H1 (cell line): ENCODE measurements at regions of chr18 and their contacts with region 1.

Region 1: DNA sequence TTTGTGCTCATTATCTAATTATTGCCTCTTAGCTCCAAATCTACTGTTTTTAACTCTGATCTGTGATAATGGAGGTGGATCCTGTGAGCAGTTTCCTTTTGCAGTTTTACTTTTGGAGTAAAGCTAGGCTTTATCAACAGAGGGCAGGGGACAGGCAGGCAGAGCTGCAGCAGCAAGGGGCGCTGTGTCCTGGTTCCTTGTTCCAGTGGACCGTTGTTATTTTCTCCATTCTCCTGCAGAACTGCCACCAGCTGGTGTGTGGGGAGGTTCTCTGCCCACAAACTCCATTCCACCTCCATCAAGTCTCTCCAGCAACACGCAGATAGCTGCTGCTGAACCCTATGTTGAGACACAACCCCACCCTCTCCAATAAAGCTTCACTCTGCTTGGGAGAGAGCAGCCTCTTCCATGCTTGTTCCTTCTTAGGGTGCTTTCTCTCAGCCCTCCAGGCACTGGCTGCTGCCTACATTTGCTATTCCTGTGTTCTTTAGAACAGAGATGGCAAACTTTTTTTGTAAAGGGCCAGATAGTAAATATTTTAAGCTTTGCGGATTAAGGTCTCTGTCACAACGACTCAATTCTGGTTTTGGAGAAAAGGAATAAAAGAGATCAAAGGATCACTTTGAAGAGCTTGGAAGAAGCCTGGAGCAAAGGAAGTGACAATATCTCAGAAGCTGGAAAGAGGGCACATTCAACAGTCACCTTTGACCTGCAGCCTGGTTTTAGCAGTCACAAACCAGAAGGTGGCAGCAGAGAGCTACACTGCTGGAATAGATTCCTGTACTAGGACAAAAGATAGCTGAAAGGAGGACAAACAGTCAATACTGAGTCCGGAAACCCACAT is 208.8 kb downstream of the CCDC178 start:
- DNase-seq: peak; percentile 50 to 84
- H3K4me3 ChIP-seq: no peak overlapping the region
- H3K27ac ChIP-seq: no peak overlapping the region
- H3K4me1 ChIP-seq: no peaks in the 10 kb centered on the region
- H3K27me3 ChIP-seq: no peaks in the 10 kb centered on the region
- CTCF ChIP-seq: peak; percentile 62 to 97 (median 88)
- EP300 ChIP-seq: no peak
- POLR2A ChIP-seq: no peak
- RAD21 ChIP-seq: peak; percentile 93 to 95

Region 2: GRCh38 chr18:33210575-33211189 is 21.0 kb before region 1 on chr18:
- CTCF ChIA-PET with region 1: interaction called, 35 read pairs
- POLR2A ChIA-PET with region 1: no interaction called
- DNase-seq: no peak
- H3K4me3 ChIP-seq: no peak overlapping the region
- H3K27ac ChIP-seq: no peak overlapping the region
- H3K4me1 ChIP-seq: no peaks in the 10 kb centered on the region
- H3K27me3 ChIP-seq: no peaks in the 10 kb centered on the region
- CTCF ChIP-seq: peak in 2 of 3 experiments; percentile 51 to 71; a peak in 2 of 4 replicates
- EP300 ChIP-seq: no peak
- POLR2A ChIP-seq: no peak
- RAD21 ChIP-seq: peak; percentile 61 to 65

Region 3: GRCh38 chr18:33316146-33316587 is 84.5 kb after region 1 on chr18:
- CTCF ChIA-PET with region 1: interaction called, 27 read pairs
- POLR2A ChIA-PET with region 1: interaction called, 3 read pairs
- DNase-seq: peak; percentile 29 to 81
- H3K4me3 ChIP-seq: peak overlapping the region; percentile 5 to 47 (median 8); a peak in 5 of 8 replicates
- H3K27ac ChIP-seq: no peak overlapping the region
- H3K4me1 ChIP-seq: no peaks in the 10 kb centered on the region
- H3K27me3 ChIP-seq: no peaks in the 10 kb centered on the region
- CTCF ChIP-seq: peak; percentile 57 to 79 (median 77)
- EP300 ChIP-seq: no peak
- POLR2A ChIP-seq: no peak
- RAD21 ChIP-seq: peak; percentile 48 to 59; a peak in 3 of 4 replicates

Region 4: GRCh38 chr18:33495278-33495677 is 263.6 kb after region 1 on chr18:
- CTCF ChIA-PET with region 1: interaction called, 17 read pairs
- POLR2A ChIA-PET with region 1: no interaction called
- DNase-seq: peak in 1 of 2 experiments; percentile 44
- H3K4me3 ChIP-seq: no peak overlapping the region
- H3K27ac ChIP-seq: no peak overlapping the region
- H3K4me1 ChIP-seq: no peaks in the 10 kb centered on the region
- H3K27me3 ChIP-seq: no peaks in the 10 kb centered on the region
- CTCF ChIP-seq: peak; percentile 52 to 91 (median 91)
- EP300 ChIP-seq: no peak
- POLR2A ChIP-seq: no peak
- RAD21 ChIP-seq: peak; percentile 90 to 94